ENCODE measurements at regions of chr19 and their contacts with region 1.

Region 1: DNA sequence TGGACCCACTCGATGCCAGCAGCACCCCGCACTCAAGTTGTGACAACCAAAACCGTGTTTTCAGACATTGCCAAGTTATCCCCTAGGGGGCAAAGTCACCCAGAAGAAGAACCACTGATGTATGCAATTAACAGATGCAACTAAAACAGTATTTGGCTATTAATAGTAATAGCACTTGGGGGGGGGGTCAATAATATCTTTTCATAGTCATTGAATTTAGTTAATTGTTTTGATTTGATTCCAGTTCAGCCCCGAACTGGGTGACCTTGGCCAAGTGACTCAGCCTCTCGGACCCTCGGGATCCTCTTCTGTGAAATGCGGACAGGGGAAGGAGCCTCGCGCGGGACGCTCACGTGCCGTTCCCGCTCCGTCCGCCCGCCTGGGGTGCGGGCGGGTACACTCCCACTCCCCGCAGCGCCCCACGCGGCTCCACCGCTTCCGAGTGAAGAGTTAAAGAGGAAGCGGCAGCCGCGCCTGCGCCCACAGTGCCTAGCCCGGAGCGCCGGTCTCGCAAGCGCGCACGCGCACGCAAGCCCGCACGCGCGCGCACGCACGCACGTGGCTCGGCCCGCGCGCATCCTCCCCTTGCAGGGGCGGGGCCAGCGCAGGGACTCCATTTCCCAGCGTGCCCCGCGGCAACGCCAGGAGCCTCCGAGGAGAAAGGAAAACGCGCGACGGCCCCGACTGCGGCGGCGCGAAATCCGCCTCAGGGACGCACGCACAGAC is 449 bp upstream of the DAZAP1 start:
- DNase-seq: peak; percentile 100
- ATAC-seq: peak; percentile 82
- H3K4me3 Mint-ChIP-seq: peak overlapping the region; percentile 78
- H3K27ac Mint-ChIP-seq: peak overlapping the region; percentile 84
- H3K4me1 Mint-ChIP-seq: peaks cover 46% of the 10 kb centered on the region
- H3K27me3 Mint-ChIP-seq: peaks cover 6% of the 10 kb centered on the region
- CTCF ChIP-seq: no peak

Region 2: DNA sequence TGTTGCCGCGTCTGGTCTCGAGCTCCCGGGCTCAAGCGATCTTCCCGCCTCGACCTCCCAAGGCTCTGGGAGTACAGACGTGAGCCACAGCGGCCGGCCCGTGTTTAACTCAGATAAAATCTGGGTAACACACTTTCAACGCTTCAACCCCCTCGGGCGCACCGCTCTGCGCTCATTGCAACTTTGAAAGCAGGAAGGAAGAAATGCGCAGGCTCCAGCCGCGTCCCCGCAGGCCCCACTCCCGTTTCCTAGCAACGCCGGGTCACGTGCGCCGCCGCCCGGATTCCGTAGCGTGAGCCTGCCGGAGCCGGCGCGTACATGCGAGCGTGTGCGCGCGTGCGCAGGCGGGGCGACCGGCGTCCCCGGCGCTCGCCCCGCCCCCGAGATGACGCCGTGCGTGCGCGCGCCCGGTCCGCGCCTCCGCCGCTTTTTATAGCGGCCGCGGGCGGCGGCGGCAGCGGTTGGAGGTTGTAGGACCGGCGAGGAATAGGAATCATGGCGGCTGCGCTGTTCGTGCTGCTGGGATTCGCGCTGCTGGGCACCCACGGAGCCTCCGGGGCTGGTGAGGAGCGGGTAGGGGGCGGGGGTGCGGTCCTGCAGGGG is 834.7 kb before region 1 on chr19 and contains the start of gene BSG:
- CTCF ChIA-PET with region 1: no interaction called
- POLR2A ChIA-PET with region 1: no interaction called
- intact Hi-C with region 1: loop called (anchors 2 kb)
- DNase-seq: peak; percentile 98
- ATAC-seq: peak; percentile 82
- H3K4me3 Mint-ChIP-seq: peak within 1 kb of the TSS; percentile 97
- H3K27ac Mint-ChIP-seq: peak within 1 kb of the TSS; percentile 99
- H3K4me1 Mint-ChIP-seq: peaks cover 36% of the 10 kb centered on the region
- H3K27me3 Mint-ChIP-seq: no peaks in the 10 kb centered on the region
- CTCF ChIP-seq: no peak
- total RNA-seq, gene BSG: 150 and 152 TPM in 2 replicates

Region 3: DNA sequence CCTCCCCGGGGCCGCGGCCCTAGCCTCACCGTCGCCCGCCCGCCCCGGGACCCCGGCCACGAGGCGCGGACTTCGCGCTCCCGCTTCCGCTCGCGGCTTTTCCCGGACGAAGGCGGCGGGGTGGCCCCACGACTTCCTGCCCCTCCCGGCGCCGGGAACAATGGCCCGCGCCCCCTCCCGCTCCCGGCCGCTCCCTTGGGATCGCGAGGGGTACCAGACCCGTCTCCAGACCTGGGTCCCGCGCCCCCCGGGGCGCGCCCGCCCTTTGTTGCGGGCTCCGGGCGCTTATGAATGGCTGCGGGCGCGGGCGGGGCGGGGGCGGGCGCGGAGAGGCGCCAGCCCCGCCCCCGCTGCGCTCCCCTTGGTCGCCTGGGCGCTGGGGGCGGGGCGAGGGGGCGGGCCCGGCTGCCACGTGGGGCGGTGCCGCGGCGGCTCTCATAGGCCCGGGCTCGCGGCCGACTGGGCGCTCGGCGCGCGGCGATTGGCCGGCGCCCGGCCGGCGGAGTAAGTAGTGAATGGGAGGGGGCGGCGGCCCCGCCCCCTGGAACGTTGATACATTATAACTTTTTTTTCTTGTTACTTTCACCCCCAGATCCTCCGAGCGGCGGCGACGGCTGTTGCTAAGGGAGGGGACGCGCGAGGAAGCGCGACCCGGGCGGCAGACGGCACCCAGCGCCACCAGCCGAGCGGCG is 157.5 kb before region 1 on chr19:
- CTCF ChIA-PET with region 1: interaction called, 6 read pairs
- POLR2A ChIA-PET with region 1: interaction called, 4 read pairs
- intact Hi-C with region 1: loop called (anchors 2 kb)
- DNase-seq: peak; percentile 84
- ATAC-seq: peak; percentile 49
- H3K4me3 Mint-ChIP-seq: peak overlapping the region; percentile 80
- H3K27ac Mint-ChIP-seq: peak overlapping the region; percentile 81
- H3K4me1 Mint-ChIP-seq: peaks cover 31% of the 10 kb centered on the region
- H3K27me3 Mint-ChIP-seq: no peaks in the 10 kb centered on the region
- CTCF ChIP-seq: no peak

Region 4: GRCh38 chr19:1285737-1286360 is 121.1 kb before region 1 on chr19 and contains the start of gene EFNA2:
- CTCF ChIA-PET with region 1: no interaction called
- POLR2A ChIA-PET with region 1: no interaction called
- intact Hi-C with region 1: no loop called
- DNase-seq: no peak
- ATAC-seq: no peak
- H3K4me3 Mint-ChIP-seq: peak within 1 kb of the TSS; percentile 70
- H3K27ac Mint-ChIP-seq: no peak within 1 kb of the TSS
- H3K4me1 Mint-ChIP-seq: peaks cover 10% of the 10 kb centered on the region
- H3K27me3 Mint-ChIP-seq: peaks cover 32% of the 10 kb centered on the region
- CTCF ChIP-seq: no peak
- total RNA-seq, gene EFNA2: not detected in 2 replicates

Region 5: GRCh38 chr19:1355568-1356507 is 51.1 kb before region 1 on chr19:
- CTCF ChIA-PET with region 1: no interaction called
- POLR2A ChIA-PET with region 1: interaction called, 3 read pairs
- intact Hi-C with region 1: loop called (anchors 5 kb)
- DNase-seq: no peak
- ATAC-seq: no peak
- H3K4me3 Mint-ChIP-seq: peak overlapping the region; percentile 86
- H3K27ac Mint-ChIP-seq: peak overlapping the region; percentile 70
- H3K4me1 Mint-ChIP-seq: peaks cover 13% of the 10 kb centered on the region
- H3K27me3 Mint-ChIP-seq: no peaks in the 10 kb centered on the region
- CTCF ChIP-seq: no peak

Region 6: GRCh38 chr19:1392939-1393530 is 13.9 kb before region 1 on chr19:
- CTCF ChIA-PET with region 1: no interaction called
- POLR2A ChIA-PET with region 1: interaction called, 12 read pairs
- intact Hi-C with region 1: no loop called
- DNase-seq: no peak
- ATAC-seq: no peak
- H3K4me3 Mint-ChIP-seq: no peak overlapping the region
- H3K27ac Mint-ChIP-seq: no peak overlapping the region
- H3K4me1 Mint-ChIP-seq: no peaks in the 10 kb centered on the region
- H3K27me3 Mint-ChIP-seq: no peaks in the 10 kb centered on the region
- CTCF ChIP-seq: no peak

Region 7: GRCh38 chr19:1478934-1479707 is 72.2 kb after region 1 on chr19 and contains the start of gene C19orf25:
- CTCF ChIA-PET with region 1: no interaction called
- POLR2A ChIA-PET with region 1: no interaction called
- intact Hi-C with region 1: loop called (anchors 2 kb)
- DNase-seq: peak; percentile 89
- ATAC-seq: peak; percentile 93
- H3K4me3 Mint-ChIP-seq: peak within 1 kb of the TSS; percentile 98
- H3K27ac Mint-ChIP-seq: peak within 1 kb of the TSS; percentile 95
- H3K4me1 Mint-ChIP-seq: peaks cover 18% of the 10 kb centered on the region
- H3K27me3 Mint-ChIP-seq: no peaks in the 10 kb centered on the region
- CTCF ChIP-seq: no peak
- total RNA-seq, gene C19orf25: 42.8 and 55.7 TPM in 2 replicates

Region 8: DNA sequence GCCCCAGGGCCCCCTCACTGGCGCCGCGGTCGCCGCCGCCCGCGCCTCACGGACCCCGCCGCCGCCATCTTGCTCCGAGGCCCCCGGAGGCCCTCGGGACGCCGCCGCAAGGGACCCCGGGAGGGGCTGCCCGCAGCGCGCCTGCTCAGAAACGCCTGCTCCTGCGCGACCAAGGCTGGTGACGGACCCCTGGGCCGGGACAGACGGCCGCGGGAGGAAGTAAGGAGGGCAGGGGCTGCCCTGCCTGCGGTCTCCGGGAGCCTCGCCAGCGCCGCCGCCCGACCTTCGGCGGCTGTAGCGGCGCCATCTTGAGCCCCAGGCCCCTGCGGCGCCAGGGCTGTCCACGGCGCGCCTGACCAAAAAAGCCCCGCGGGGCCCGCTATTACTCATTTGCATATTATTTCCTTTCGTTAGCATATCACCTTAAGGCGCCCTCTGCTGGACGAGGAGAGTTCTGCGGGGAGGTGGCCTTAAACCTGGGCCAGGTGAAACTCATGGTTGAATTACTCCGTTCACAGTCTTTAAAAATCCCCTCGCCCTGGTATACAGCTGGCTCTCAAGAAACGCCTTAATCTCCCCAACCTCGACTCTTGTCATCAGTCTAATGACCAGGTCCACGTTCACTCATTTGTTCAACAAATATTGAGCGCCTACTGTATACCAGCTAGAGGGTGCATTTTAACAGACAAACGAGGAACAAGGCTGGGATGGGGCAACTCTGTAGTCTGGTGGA is 441.6 kb after region 1 on chr19 and contains the start of gene REXO1:
- CTCF ChIA-PET with region 1: no interaction called
- POLR2A ChIA-PET with region 1: no interaction called
- intact Hi-C with region 1: loop called (anchors 2 kb)
- DNase-seq: peak; percentile 98
- ATAC-seq: peak; percentile 74
- H3K4me3 Mint-ChIP-seq: peak within 1 kb of the TSS; percentile 88
- H3K27ac Mint-ChIP-seq: peak within 1 kb of the TSS; percentile 88
- H3K4me1 Mint-ChIP-seq: peaks cover 69% of the 10 kb centered on the region
- H3K27me3 Mint-ChIP-seq: no peaks in the 10 kb centered on the region
- CTCF ChIP-seq: peak; percentile 86
- total RNA-seq, gene REXO1: 56.3 and 69.6 TPM in 2 replicates

Measured in activated B cell treated with CpG ODN at 0.5 μM for 24 hours (primary cell).